ENCODE measurements at regions of chr17 and their contacts with region 1.

Region 1: GRCh38 chr17:68435876-68436842 is 21.1 kb downstream of the WIPI1 start:
- DNase-seq: peak; percentile 74 to 92 (median 82)
- ATAC-seq: peak; percentile 80
- H3K4me3 ChIP-seq: no peak overlapping the region
- H3K4me3 Mint-ChIP-seq: peak overlapping the region; percentile 8
- H3K27ac ChIP-seq: no peak overlapping the region
- H3K27ac Mint-ChIP-seq: peak overlapping the region; percentile 95
- H3K4me1 ChIP-seq: peaks cover 40% of the 10 kb centered on the region
- H3K4me1 Mint-ChIP-seq: peaks cover 61% of the 10 kb centered on the region
- H3K27me3 ChIP-seq: no peaks in the 10 kb centered on the region
- H3K27me3 Mint-ChIP-seq: no peaks in the 10 kb centered on the region
- CTCF ChIP-seq: peak; percentile 89

Region 2: GRCh38 chr17:68057531-68057952 is 378.6 kb before region 1 on chr17:
- CTCF ChIA-PET with region 1: no interaction called
- POLR2A ChIA-PET with region 1: no interaction called
- intact Hi-C with region 1: loop called (anchors 1 to 5 kb)
- DNase-seq: peak; percentile 6 to 64 (median 44)
- ATAC-seq: peak; percentile 89
- H3K4me3 ChIP-seq: no peak overlapping the region
- H3K4me3 Mint-ChIP-seq: no peak overlapping the region
- H3K27ac ChIP-seq: no peak overlapping the region
- H3K27ac Mint-ChIP-seq: no peak overlapping the region
- H3K4me1 ChIP-seq: peaks cover 26% of the 10 kb centered on the region
- H3K4me1 Mint-ChIP-seq: peaks cover 7% of the 10 kb centered on the region
- H3K27me3 ChIP-seq: no peaks in the 10 kb centered on the region
- H3K27me3 Mint-ChIP-seq: no peaks in the 10 kb centered on the region
- CTCF ChIP-seq: peak; percentile 61

Region 3: DNA sequence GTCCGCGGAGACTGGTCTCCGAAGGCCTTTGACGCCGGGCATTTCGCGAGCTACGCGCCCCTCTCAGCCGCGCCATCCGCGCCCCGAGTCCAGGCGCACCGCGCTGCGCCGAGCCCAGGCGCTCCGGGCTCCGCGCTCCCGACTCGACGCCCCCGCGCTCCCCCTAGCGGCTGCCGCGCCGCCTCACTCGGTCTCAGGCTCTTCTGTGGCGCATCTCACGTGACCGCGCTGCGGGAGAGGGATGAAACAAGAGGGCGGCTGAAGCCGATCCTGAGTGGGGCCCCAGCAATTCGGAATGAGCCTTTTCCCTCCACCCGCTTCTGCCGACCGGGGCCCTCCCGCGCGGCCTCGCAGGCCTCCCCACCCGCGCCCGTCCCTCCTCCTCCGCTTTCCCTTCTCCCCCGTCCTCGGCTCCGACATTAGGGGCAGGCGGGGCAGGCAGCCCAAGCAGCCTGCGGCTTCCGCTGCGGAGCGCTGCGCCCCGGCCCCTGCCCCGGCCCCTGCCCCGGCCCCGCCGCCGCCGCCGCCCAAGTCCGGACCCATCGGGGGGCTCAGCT is 230.8 kb before region 1 on chr17:
- CTCF ChIA-PET with region 1: interaction called, 5 read pairs
- POLR2A ChIA-PET with region 1: interaction called, 3 read pairs
- intact Hi-C with region 1: loop called in 1 of 2 experiments (anchors 1 kb)
- DNase-seq: peak; percentile 82 to 96 (median 92)
- ATAC-seq: peak; percentile 73
- H3K4me3 ChIP-seq: peak overlapping the region; percentile 70
- H3K4me3 Mint-ChIP-seq: peak overlapping the region; percentile 94
- H3K27ac ChIP-seq: peak overlapping the region; percentile 58 to 76
- H3K27ac Mint-ChIP-seq: peak overlapping the region; percentile 84
- H3K4me1 ChIP-seq: peaks cover 33% of the 10 kb centered on the region
- H3K4me1 Mint-ChIP-seq: peaks cover 36% of the 10 kb centered on the region
- H3K27me3 ChIP-seq: no peaks in the 10 kb centered on the region
- H3K27me3 Mint-ChIP-seq: peaks cover 5% of the 10 kb centered on the region
- CTCF ChIP-seq: peak; percentile 87

Region 4: GRCh38 chr17:68255731-68256538 is 180.2 kb before region 1 on chr17:
- CTCF ChIA-PET with region 1: interaction called, 10 read pairs
- POLR2A ChIA-PET with region 1: interaction called, 3 read pairs
- intact Hi-C with region 1: no loop called
- DNase-seq: peak in 3 of 14 experiments; percentile 54 to 81 (median 68)
- ATAC-seq: peak; percentile 36
- H3K4me3 ChIP-seq: no peak overlapping the region
- H3K4me3 Mint-ChIP-seq: peak overlapping the region; percentile 21
- H3K27ac ChIP-seq: peak overlapping the region; percentile 1 to 84
- H3K27ac Mint-ChIP-seq: peak overlapping the region; percentile 96
- H3K4me1 ChIP-seq: peaks cover 61% of the 10 kb centered on the region
- H3K4me1 Mint-ChIP-seq: peaks cover 88% of the 10 kb centered on the region
- H3K27me3 ChIP-seq: no peaks in the 10 kb centered on the region
- H3K27me3 Mint-ChIP-seq: no peaks in the 10 kb centered on the region
- CTCF ChIP-seq: no peak

Region 5: DNA sequence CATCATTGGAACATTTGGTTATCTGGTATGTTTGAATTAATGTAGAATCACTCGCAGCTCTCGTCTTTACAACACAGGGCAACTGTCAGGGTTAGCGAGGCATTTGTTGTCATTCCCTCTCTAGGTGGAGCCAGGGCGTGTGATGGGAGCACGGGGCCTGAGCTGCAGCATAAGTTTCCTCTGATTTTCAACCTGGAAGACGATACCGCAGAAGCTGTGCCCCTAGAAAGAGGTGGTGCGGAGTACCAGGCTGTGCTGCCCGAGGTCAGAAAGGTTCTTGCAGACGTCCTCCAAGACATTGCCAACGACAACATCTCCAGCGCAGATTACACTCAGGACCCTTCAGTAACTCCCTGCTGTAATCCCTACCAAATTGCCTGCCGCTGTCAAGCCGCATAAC is 16.1 kb before region 1 on chr17:
- CTCF ChIA-PET with region 1: interaction called, 7 read pairs
- POLR2A ChIA-PET with region 1: interaction called, 3 read pairs
- intact Hi-C with region 1: loop called in 1 of 2 experiments (anchors 2 kb)
- DNase-seq: no peak
- ATAC-seq: no peak
- H3K4me3 ChIP-seq: no peak overlapping the region
- H3K4me3 Mint-ChIP-seq: no peak overlapping the region
- H3K27ac ChIP-seq: no peak overlapping the region
- H3K27ac Mint-ChIP-seq: no peak overlapping the region
- H3K4me1 ChIP-seq: no peaks in the 10 kb centered on the region
- H3K4me1 Mint-ChIP-seq: peaks cover 26% of the 10 kb centered on the region
- H3K27me3 ChIP-seq: no peaks in the 10 kb centered on the region
- H3K27me3 Mint-ChIP-seq: no peaks in the 10 kb centered on the region
- CTCF ChIP-seq: no peak

Region 6: DNA sequence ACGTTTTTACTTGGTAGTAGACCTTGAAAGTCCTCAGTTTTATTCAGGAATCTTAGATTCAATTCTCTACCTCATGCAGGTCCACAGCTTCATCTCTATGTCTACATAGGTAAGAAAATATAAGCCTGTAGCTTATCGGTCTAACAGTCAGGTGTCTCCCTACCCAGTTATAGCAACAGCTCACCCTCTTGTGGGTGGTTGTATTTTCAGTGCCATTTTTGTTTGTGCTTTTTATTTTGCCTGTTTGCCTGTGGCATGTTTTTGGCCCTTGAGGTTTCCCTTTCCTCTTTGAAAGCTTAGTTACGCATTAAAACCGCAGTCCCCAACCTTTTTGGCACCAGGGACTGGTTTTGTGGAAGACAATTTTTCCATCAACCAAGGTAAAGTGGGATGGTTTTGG is 44.7 kb after region 1 on chr17:
- CTCF ChIA-PET with region 1: no interaction called
- POLR2A ChIA-PET with region 1: no interaction called
- intact Hi-C with region 1: no loop called
- DNase-seq: no peak
- ATAC-seq: no peak
- H3K4me3 ChIP-seq: no peak overlapping the region
- H3K4me3 Mint-ChIP-seq: no peak overlapping the region
- H3K27ac ChIP-seq: no peak overlapping the region
- H3K27ac Mint-ChIP-seq: no peak overlapping the region
- H3K4me1 ChIP-seq: no peaks in the 10 kb centered on the region
- H3K4me1 Mint-ChIP-seq: no peaks in the 10 kb centered on the region
- H3K27me3 ChIP-seq: no peaks in the 10 kb centered on the region
- H3K27me3 Mint-ChIP-seq: peaks cover 16% of the 10 kb centered on the region
- CTCF ChIP-seq: no peak

Region 7: GRCh38 chr17:68613739-68614298 is 177.7 kb after region 1 on chr17:
- CTCF ChIA-PET with region 1: no interaction called
- POLR2A ChIA-PET with region 1: no interaction called
- intact Hi-C with region 1: no loop called
- DNase-seq: peak in 3 of 14 experiments; percentile 41 to 42 (median 42)
- ATAC-seq: no peak
- H3K4me3 ChIP-seq: no peak overlapping the region
- H3K4me3 Mint-ChIP-seq: no peak overlapping the region
- H3K27ac ChIP-seq: no peak overlapping the region
- H3K27ac Mint-ChIP-seq: no peak overlapping the region
- H3K4me1 ChIP-seq: no peaks in the 10 kb centered on the region
- H3K4me1 Mint-ChIP-seq: no peaks in the 10 kb centered on the region
- H3K27me3 ChIP-seq: peaks cover 0 to 11% of the 10 kb centered on the region in 2 experiments
- H3K27me3 Mint-ChIP-seq: peaks cover 46% of the 10 kb centered on the region
- CTCF ChIP-seq: no peak